ENCODE measurements at regions of chr19 and their contacts with region 1.

Region 1: GRCh38 chr19:49665351-49666119 is at the starts of genes BCL2L12 and IRF3:
- DNase-seq: peak; percentile 93
- ATAC-seq: peak; percentile 91
- H3K4me3 ChIP-seq: peak within 1 kb of the TSS; percentile 77
- H3K27ac ChIP-seq: peak within 1 kb of the TSS; percentile 87
- H3K4me1 ChIP-seq: peaks cover 9% of the 10 kb centered on the region
- H3K27me3 ChIP-seq: no peaks in the 10 kb centered on the region
- CTCF ChIP-seq: no peak
- POLR2A ChIP-seq: peak; percentile 77
- RAD21 ChIP-seq: no peak
- total RNA-seq, gene BCL2L12: 3.9 and 4.7 TPM in 2 replicates
- total RNA-seq, gene IRF3: 37.2 and 39.6 TPM in 2 replicates

Region 2: DNA sequence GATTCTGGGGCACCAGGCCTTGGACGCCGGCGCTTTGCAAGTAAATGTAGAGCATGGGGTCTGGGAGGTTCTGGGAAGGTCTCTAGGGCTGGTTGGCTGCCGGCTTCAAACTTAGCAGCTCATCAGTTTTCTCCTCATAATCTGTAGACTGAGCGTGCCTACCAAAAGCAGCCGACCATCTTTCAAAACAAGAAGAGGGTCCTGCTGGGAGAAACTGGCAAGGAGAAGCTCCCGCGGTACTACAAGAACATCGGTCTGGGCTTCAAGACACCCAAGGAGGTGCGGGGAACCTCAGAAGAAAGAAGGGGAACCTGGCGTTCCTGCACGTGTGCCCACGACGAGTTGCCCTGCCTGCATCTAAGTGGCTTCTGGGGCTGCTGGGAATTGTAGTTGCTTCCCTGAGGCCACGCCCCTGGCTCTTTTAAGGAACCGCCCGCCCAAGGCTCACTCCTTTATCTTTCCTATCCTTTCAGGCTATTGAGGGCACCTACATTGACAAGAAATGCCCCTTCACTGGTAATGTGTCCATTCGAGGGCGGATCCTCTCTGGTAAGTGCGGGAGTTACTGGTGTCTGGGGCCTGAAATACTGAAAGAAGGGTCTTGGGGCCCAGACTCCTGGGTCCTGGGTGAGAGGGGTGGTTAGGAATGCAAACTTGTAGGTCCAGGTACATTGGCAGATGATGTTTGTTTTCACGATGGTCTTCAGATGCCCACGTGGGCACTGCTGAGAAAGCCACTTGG is 168.3 kb before region 1 on chr19:
- CTCF ChIA-PET with region 1: no interaction called
- POLR2A ChIA-PET with region 1: no interaction called
- dilution Hi-C with region 1: no loop called
- in situ Hi-C with region 1: loop called (anchors 10 kb)
- intact Hi-C with region 1: no loop called
- DNase-seq: peak; percentile 47
- ATAC-seq: 0 out of 2 replicates have a peak, but pooled peaks have one; percentile 4
- H3K4me3 ChIP-seq: peak overlapping the region; percentile 57
- H3K27ac ChIP-seq: peak overlapping the region; percentile 67
- H3K4me1 ChIP-seq: peaks cover 6% of the 10 kb centered on the region
- H3K27me3 ChIP-seq: no peaks in the 10 kb centered on the region
- CTCF ChIP-seq: no peak
- POLR2A ChIP-seq: 0 out of 2 replicates have a peak, but pooled peaks have one; percentile 37
- RAD21 ChIP-seq: no peak

Measured in IMR-90 (cell line).